Aorta (tissue), 5 donors: ENCODE measurements at regions of chr6 and their contacts with region 1.

Region 1: DNA sequence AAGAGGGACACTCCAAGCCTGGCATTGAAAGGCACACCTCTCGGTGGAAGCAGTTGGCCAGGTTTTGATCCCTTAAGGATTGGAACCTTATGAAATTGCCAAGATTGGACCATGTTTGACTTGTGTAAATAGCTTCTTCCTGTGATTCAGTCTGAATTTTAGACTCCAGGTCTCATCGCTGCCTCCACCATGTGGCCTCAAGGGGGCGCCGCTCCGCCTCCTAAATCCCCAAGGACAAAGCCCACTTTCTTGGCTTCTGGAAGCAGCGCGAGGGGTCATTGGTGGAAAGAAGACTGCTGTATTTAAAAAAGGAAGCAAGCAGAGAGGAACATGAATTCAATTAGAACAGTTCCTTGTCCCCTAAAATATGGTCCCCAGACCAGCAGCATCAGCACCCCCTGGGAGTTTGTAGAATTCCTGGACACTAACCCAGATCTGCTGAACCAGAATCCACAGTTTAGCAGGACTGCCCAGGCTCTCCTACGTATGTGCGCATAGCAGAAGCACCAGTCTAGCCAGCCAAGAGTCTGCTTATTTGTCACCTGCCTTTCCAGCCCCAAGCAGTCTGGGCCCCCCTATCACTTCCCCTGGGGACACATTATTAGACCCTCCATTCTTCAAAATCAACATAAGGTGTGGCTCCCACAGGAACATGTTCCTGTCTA is 108.5 kb downstream of the LY86 start:
- DNase-seq: peak; percentile 80 to 85
- ATAC-seq: no peak
- H3K4me3 ChIP-seq: no peak overlapping the region
- H3K27ac ChIP-seq: no peak overlapping the region
- H3K4me1 ChIP-seq: peaks cover 3% of the 10 kb centered on the region in 2 donors
- H3K27me3 ChIP-seq: no peaks in the 10 kb centered on the region

Region 2: DNA sequence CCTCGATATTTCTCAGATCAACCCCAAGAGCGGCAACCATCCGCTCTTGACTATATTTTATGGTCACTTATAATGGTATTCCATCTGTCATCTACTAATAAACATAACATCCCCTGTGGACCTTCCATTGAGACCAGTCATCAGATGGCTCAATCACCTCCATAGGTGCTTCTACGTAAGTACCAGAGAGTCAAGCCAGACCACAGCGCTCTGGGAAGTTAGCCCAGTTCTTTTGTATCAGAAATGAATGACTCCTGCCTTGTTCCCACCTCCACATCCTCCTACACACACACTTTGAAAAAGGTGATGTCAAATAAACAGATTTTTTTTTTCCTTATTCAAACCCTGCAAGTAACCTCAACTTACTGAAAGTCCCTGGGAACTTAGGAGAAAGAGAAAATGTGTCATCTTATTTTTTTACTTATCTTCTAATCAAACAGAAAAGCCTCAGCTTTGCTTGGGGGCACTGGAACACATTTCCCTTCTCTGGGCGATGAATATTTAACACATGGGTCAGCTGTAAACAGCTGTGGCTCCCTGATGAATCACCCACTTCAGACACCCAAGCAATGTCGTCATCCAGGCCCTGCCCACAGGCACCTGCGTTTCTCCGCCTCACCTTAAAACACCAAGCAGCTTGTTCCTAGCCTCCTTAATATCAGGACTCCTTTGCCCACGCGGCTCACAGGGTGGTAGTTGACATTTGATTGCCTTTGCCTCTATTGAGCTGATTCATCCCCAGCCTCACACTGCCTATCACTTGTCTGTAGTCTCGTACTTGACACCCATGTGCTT is 229.8 kb before region 1 on chr6:
- intact Hi-C with region 1: no loop called
- DNase-seq: no peak
- ATAC-seq: no peak
- H3K4me3 ChIP-seq: no peak overlapping the region
- H3K27ac ChIP-seq: no peak overlapping the region
- H3K4me1 ChIP-seq: peaks cover 0 to 4% of the 10 kb centered on the region in 2 donors
- H3K27me3 ChIP-seq: no peaks in the 10 kb centered on the region

Region 3: GRCh38 chr6:6758915-6759654 is 62.1 kb after region 1 on chr6:
- intact Hi-C with region 1: loop called in 1 of 2 experiments (anchors 2 kb)
- DNase-seq: no peak
- ATAC-seq: peak; percentile 86
- H3K4me3 ChIP-seq: no peak overlapping the region
- H3K27ac ChIP-seq: no peak overlapping the region
- H3K4me1 ChIP-seq: no peaks in the 10 kb centered on the region
- H3K27me3 ChIP-seq: no peaks in the 10 kb centered on the region